ENCODE measurements at regions of chr11 and their contacts with region 1.

Region 1: GRCh38 chr11:62394825-62395538 is 23.9 kb upstream of the SCGB1A1 start:
- DNase-seq: peak; percentile 31
- H3K4me3 ChIP-seq: peak overlapping the region; percentile 29
- CTCF ChIP-seq: peak; percentile 49

Region 2: GRCh38 chr11:62273789-62274275 is 121.2 kb before region 1 on chr11:
- CTCF ChIA-PET with region 1: no interaction called
- POLR2A ChIA-PET with region 1: no interaction called
- DNase-seq: no peak
- H3K4me3 ChIP-seq: no peak overlapping the region
- CTCF ChIP-seq: no peak

Region 3: GRCh38 chr11:62383822-62384221 is 11.2 kb before region 1 on chr11:
- CTCF ChIA-PET with region 1: interaction called, 25 read pairs
- POLR2A ChIA-PET with region 1: no interaction called
- DNase-seq: no peak
- H3K4me3 ChIP-seq: no peak overlapping the region
- CTCF ChIP-seq: no peak

Region 4: GRCh38 chr11:62427630-62428233 is 32.8 kb after region 1 on chr11:
- CTCF ChIA-PET with region 1: interaction called, 62 read pairs
- POLR2A ChIA-PET with region 1: interaction called, 5 read pairs
- DNase-seq: peak; percentile 23
- H3K4me3 ChIP-seq: no peak overlapping the region
- CTCF ChIP-seq: no peak

Region 5: GRCh38 chr11:62508268-62509058 is 113.5 kb after region 1 on chr11:
- CTCF ChIA-PET with region 1: interaction called, 11 read pairs
- POLR2A ChIA-PET with region 1: no interaction called
- DNase-seq: peak; percentile 17
- H3K4me3 ChIP-seq: peak overlapping the region; percentile 1
- CTCF ChIP-seq: peak; percentile 68

Region 6: GRCh38 chr11:62556108-62556871 is 161.3 kb after region 1 on chr11:
- CTCF ChIA-PET with region 1: interaction called, 145 read pairs
- POLR2A ChIA-PET with region 1: interaction called, 12 read pairs
- DNase-seq: peak; percentile 70
- H3K4me3 ChIP-seq: peak overlapping the region; percentile 39
- CTCF ChIP-seq: no peak

Region 7: GRCh38 chr11:62591448-62592145 is 196.6 kb after region 1 on chr11 and contains the start of gene TUT1:
- CTCF ChIA-PET with region 1: interaction called, 43 read pairs
- POLR2A ChIA-PET with region 1: interaction called, 14 read pairs
- DNase-seq: peak; percentile 97
- H3K4me3 ChIP-seq: peak within 1 kb of the TSS; percentile 77
- CTCF ChIP-seq: no peak

Region 8: GRCh38 chr11:62689421-62690183 is 294.6 kb after region 1 on chr11 and contains the start of gene LRRN4CL:
- CTCF ChIA-PET with region 1: interaction called, 44 read pairs
- POLR2A ChIA-PET with region 1: no interaction called
- DNase-seq: no peak
- H3K4me3 ChIP-seq: peak within 1 kb of the TSS; percentile 45
- CTCF ChIP-seq: no peak

Measured in AG04449 (cell line).